ENCODE measurements at regions of chr10 and their contacts with region 1.

Region 1: DNA sequence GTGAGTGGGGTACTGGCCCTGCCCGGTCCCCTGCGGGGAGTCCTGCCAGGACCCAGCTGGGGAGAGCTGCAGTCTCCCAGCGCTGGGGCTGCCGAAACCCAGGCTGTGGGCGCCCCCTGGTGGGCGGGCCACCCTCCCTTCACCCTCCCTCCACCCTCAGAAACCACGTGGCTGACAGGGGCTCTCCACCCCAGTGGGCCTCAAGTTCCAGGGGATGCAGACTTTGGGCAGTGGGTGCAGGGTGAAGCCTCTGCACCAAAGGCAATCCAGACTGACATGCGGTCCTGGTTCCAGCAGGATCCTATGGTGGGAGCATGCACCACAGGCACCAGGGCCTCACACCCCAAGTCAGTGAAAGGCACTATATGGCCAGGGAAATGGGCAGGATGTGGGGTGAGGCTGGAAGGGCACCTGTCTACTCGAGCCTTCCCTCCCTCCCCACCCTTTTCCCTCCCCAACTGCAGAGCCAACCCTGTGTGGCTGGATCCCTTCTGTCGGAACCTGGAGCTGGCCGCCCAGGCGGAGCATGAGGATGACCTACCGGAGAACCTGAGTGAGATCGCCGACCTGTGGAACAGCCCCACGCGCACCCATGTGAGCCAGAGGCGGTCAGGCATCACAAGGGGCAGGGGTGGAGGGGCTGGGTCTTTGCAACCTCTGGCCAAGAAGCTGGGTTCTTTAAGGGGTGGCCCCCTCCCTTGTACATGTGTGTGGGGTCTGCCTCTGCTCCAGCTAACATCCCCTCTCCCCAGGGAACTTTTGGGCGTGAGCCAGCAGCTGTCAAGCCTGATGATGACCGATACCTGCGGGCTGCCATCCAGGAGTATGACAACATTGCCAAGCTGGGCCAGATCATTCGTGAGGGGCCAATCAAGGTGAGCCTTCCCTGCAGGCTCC is 38.8 kb downstream of the PSAP start:
- DNase-seq: peak; percentile 64 to 89 (median 76)
- ATAC-seq: peak; percentile 91
- H3K4me3 ChIP-seq: no peak overlapping the region
- H3K4me3 Mint-ChIP-seq: no peak overlapping the region
- H3K27ac ChIP-seq: no peak overlapping the region
- H3K27ac Mint-ChIP-seq: no peak overlapping the region
- H3K4me1 ChIP-seq: peaks cover 8% of the 10 kb centered on the region
- H3K4me1 Mint-ChIP-seq: no peaks in the 10 kb centered on the region
- H3K27me3 ChIP-seq: no peaks in the 10 kb centered on the region
- H3K27me3 Mint-ChIP-seq: no peaks in the 10 kb centered on the region
- CTCF ChIP-seq: peak; percentile 81

Region 2: DNA sequence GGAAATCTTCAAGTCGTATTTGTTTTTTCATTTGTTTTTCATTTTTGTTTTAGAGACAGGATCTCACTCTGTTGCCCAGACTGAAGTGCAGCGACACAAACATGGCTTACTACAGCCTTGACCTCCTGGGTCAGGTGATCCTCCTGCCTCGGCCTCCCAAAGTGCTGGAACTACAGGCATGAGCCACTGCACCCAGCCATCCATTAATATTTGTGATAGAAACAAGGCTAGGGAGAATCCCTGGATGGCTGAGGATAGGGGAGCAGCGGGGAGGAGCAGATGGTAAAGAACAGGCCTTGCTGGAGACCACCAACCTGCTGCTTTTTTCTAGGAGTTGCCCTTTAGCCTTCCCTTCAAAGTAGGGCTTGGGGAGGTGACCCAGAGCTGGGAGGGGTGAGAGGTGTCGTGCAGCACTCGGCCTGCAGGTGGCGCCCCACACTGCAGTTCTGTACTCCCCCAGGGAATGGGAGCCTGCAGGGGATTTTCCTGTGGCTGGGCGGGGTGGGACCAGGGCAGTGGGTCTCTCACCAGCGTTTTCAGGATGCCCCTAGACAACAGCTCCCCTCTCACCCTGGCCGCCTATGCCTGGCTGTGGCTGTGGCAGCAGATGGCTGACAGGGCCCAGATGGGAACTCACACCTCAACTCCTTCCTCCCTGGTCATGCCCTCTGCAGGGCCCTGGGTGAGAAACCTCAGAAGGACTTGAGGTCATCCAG is 428.1 kb before region 1 on chr10:
- CTCF ChIA-PET with region 1: interaction called, 10 read pairs
- POLR2A ChIA-PET with region 1: interaction called, 4 read pairs
- intact Hi-C with region 1: loop called (anchors 1 kb)
- DNase-seq: peak; percentile 52 to 84 (median 67)
- ATAC-seq: peak; percentile 96
- H3K4me3 ChIP-seq: no peak overlapping the region
- H3K4me3 Mint-ChIP-seq: no peak overlapping the region
- H3K27ac ChIP-seq: no peak overlapping the region
- H3K27ac Mint-ChIP-seq: no peak overlapping the region
- H3K4me1 ChIP-seq: peaks cover 5% of the 10 kb centered on the region
- H3K4me1 Mint-ChIP-seq: no peaks in the 10 kb centered on the region
- H3K27me3 ChIP-seq: no peaks in the 10 kb centered on the region
- H3K27me3 Mint-ChIP-seq: no peaks in the 10 kb centered on the region
- CTCF ChIP-seq: peak; percentile 90

Region 3: DNA sequence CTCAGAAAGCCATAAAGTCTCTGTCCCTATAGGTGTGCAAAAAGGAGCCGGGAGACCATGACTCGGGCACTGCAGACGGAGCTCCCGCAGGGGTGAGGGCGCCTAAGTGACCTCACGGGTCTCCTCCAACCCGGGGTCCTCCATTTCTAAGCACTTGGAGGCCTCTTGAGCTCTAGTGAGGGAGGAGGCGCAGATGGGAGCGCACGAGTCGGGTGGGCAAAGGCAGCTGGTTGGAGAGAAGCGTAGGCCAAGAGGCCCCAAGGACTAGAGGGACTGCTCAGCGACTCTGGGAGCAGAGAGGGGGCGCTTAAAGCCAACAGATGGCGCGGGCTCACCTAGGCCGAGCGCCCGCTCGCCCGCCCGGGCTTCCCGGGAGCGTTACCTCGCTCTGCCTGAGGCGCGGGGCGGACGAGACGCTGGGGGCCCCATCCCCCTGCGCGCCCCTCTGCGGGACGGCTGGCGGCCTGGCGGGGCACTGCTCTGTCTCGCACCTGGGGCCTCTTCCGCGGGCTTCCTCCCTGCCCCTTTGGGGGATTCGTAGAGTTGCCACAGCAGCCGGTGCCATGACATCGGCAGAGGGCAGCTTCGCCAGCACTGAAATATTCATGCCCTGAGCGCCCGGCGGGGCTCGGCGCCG is 416.1 kb before region 1 on chr10:
- CTCF ChIA-PET with region 1: no interaction called
- POLR2A ChIA-PET with region 1: no interaction called
- intact Hi-C with region 1: loop called in 1 of 2 experiments (anchors 5 kb)
- DNase-seq: peak in 5 of 14 experiments; percentile 19 to 57 (median 33)
- ATAC-seq: peak; percentile 43
- H3K4me3 ChIP-seq: peak overlapping the region; percentile 26
- H3K4me3 Mint-ChIP-seq: peak overlapping the region; percentile 63
- H3K27ac ChIP-seq: no peak overlapping the region
- H3K27ac Mint-ChIP-seq: no peak overlapping the region
- H3K4me1 ChIP-seq: peaks cover 14% of the 10 kb centered on the region
- H3K4me1 Mint-ChIP-seq: peaks cover 3% of the 10 kb centered on the region
- H3K27me3 ChIP-seq: peaks cover 38 to 54% of the 10 kb centered on the region in 2 experiments
- H3K27me3 Mint-ChIP-seq: peaks cover 68% of the 10 kb centered on the region
- CTCF ChIP-seq: no peak

Region 4: GRCh38 chr10:71569775-71570588 is 242.3 kb before region 1 on chr10:
- CTCF ChIA-PET with region 1: no interaction called
- POLR2A ChIA-PET with region 1: no interaction called
- intact Hi-C with region 1: loop called in 1 of 2 experiments (anchors 5 kb)
- DNase-seq: peak; percentile 52 to 86 (median 75)
- ATAC-seq: no peak
- H3K4me3 ChIP-seq: no peak overlapping the region
- H3K4me3 Mint-ChIP-seq: no peak overlapping the region
- H3K27ac ChIP-seq: no peak overlapping the region
- H3K27ac Mint-ChIP-seq: no peak overlapping the region
- H3K4me1 ChIP-seq: no peaks in the 10 kb centered on the region
- H3K4me1 Mint-ChIP-seq: no peaks in the 10 kb centered on the region
- H3K27me3 ChIP-seq: no peaks in the 10 kb centered on the region
- H3K27me3 Mint-ChIP-seq: no peaks in the 10 kb centered on the region
- CTCF ChIP-seq: peak; percentile 87

Region 5: DNA sequence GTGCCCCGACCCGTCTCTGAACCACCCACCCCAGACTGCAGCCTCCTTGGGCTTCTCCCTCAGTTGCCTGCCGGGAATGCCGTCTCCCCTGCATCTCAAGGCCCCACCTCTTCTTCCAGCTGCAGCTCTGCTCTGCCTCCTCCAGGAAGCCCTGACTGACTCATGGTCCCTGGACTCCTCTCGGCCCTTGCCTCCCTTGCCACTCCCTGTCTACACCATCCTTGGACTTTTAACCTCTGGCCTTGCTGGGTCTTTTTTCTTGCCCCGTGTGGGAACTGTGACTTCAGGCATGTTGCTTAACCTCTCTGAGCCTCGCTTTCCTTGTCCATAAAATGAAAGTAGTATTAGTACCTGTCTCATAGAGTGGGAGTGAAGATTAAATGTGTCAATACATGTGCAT is 149.0 kb before region 1 on chr10:
- CTCF ChIA-PET with region 1: interaction called, 3 read pairs
- POLR2A ChIA-PET with region 1: no interaction called
- intact Hi-C with region 1: loop called (anchors 2 to 5 kb)
- DNase-seq: no peak
- ATAC-seq: no peak
- H3K4me3 ChIP-seq: no peak overlapping the region
- H3K4me3 Mint-ChIP-seq: no peak overlapping the region
- H3K27ac ChIP-seq: no peak overlapping the region
- H3K27ac Mint-ChIP-seq: no peak overlapping the region
- H3K4me1 ChIP-seq: peaks cover 23% of the 10 kb centered on the region
- H3K4me1 Mint-ChIP-seq: peaks cover 13% of the 10 kb centered on the region
- H3K27me3 ChIP-seq: no peaks in the 10 kb centered on the region
- H3K27me3 Mint-ChIP-seq: no peaks in the 10 kb centered on the region
- CTCF ChIP-seq: no peak

Region 6: GRCh38 chr10:71878327-71879034 is 66.2 kb after region 1 on chr10:
- CTCF ChIA-PET with region 1: no interaction called
- POLR2A ChIA-PET with region 1: no interaction called
- intact Hi-C with region 1: no loop called
- DNase-seq: peak in 7 of 14 experiments; percentile 6 to 46 (median 24)
- ATAC-seq: peak; percentile 65
- H3K4me3 ChIP-seq: no peak overlapping the region
- H3K4me3 Mint-ChIP-seq: peak overlapping the region; percentile 71
- H3K27ac ChIP-seq: no peak overlapping the region
- H3K27ac Mint-ChIP-seq: no peak overlapping the region
- H3K4me1 ChIP-seq: peaks cover 14% of the 10 kb centered on the region
- H3K4me1 Mint-ChIP-seq: peaks cover 24% of the 10 kb centered on the region
- H3K27me3 ChIP-seq: no peaks in the 10 kb centered on the region
- H3K27me3 Mint-ChIP-seq: no peaks in the 10 kb centered on the region
- CTCF ChIP-seq: no peak